Activated CD8-positive, alpha-beta T cell treated with anti-CD3 and anti-CD28 coated beads for 36 hours (primary cell): ENCODE measurements at regions of chr10 and their contacts with region 1.

Region 1: DNA sequence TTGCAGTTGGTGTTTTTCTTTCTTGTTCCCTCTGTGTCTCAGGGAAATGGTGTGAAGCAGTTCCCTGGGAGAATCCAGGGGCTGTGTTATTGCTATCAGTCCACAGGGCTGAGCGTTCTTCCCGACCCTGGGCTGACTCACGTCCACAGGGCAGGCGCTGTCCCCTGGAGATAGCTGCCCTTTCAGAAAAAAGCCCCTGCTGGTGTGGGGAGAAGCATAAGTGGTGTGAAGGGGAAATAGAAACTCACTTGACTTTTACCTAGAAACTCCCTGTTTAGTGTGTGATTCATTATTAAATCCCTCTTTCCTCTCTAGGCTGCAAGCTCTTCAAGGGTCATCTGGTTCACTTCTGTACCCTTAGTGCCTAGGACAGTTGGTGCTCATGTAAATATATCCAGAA is 63.3 kb upstream of the SMNDC1 start:
- DNase-seq: peak; percentile 32
- ATAC-seq: peak; percentile 43
- H3K4me3 Mint-ChIP-seq: no peak overlapping the region
- H3K27ac Mint-ChIP-seq: no peak overlapping the region
- H3K4me1 Mint-ChIP-seq: peaks cover 56% of the 10 kb centered on the region
- H3K27me3 Mint-ChIP-seq: no peaks in the 10 kb centered on the region
- CTCF ChIP-seq: no peak

Region 2: GRCh38 chr10:110340816-110341215 is 27.2 kb before region 1 on chr10:
- CTCF ChIA-PET with region 1: no interaction called
- POLR2A ChIA-PET with region 1: no interaction called
- intact Hi-C with region 1: no loop called
- DNase-seq: no peak
- ATAC-seq: no peak
- H3K4me3 Mint-ChIP-seq: no peak overlapping the region
- H3K27ac Mint-ChIP-seq: no peak overlapping the region
- H3K4me1 Mint-ChIP-seq: peaks cover 3% of the 10 kb centered on the region
- H3K27me3 Mint-ChIP-seq: peaks cover 13% of the 10 kb centered on the region
- CTCF ChIP-seq: no peak

Region 3: DNA sequence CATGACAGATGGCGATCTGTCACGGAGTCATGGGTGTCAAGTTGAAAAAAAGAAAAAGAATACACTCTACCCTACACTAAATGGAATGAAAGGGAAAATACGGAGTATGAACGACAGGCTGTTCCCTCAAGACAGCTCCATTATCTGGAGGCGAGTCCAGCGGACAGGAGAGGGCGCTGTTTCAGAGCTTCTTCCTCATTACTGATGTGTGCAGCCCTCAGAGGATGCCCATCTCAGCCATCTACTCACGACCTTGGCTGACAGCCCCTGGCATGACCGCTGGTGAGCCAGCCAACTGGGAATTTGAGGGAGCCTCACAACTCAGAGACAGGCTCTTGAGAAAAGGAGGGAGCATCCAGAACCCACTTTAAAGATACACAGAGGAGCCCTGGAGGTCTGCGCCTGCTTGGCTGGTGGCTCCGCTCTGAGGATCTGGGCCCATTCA is 13.7 kb before region 1 on chr10:
- CTCF ChIA-PET with region 1: interaction called, 56 read pairs
- POLR2A ChIA-PET with region 1: interaction called, 10 read pairs
- intact Hi-C with region 1: no loop called
- DNase-seq: peak; percentile 95
- ATAC-seq: peak; percentile 40
- H3K4me3 Mint-ChIP-seq: no peak overlapping the region
- H3K27ac Mint-ChIP-seq: peak overlapping the region; percentile 87
- H3K4me1 Mint-ChIP-seq: peaks cover 60% of the 10 kb centered on the region
- H3K27me3 Mint-ChIP-seq: peaks cover 2% of the 10 kb centered on the region
- CTCF ChIP-seq: peak; percentile 90

Region 4: GRCh38 chr10:111785921-111786320 is 1417.9 kb after region 1 on chr10:
- CTCF ChIA-PET with region 1: no interaction called
- POLR2A ChIA-PET with region 1: no interaction called
- intact Hi-C with region 1: no loop called
- DNase-seq: no peak
- ATAC-seq: no peak
- H3K4me3 Mint-ChIP-seq: no peak overlapping the region
- H3K27ac Mint-ChIP-seq: no peak overlapping the region
- H3K4me1 Mint-ChIP-seq: no peaks in the 10 kb centered on the region
- H3K27me3 Mint-ChIP-seq: no peaks in the 10 kb centered on the region
- CTCF ChIP-seq: no peak